Activated CD4-positive, alpha-beta T cell treated with anti-CD3 and anti-CD28 coated beads, Interleukin-2, amount 10 ng/mL, durations not matched to agents 24 days and 14 days (primary cell): ENCODE measurements at regions of chr7 and their contacts with region 1.

Region 1: GRCh38 chr7:142811154-142811737 is 40.5 kb downstream of the PRSS2 start:
- DNase-seq: peak; percentile 86
- H3K4me3 Mint-ChIP-seq: peak overlapping the region; percentile 73
- H3K27ac Mint-ChIP-seq: peak overlapping the region; percentile 99
- H3K4me1 Mint-ChIP-seq: peaks cover 75% of the 10 kb centered on the region
- H3K27me3 Mint-ChIP-seq: peaks cover 2% of the 10 kb centered on the region

Region 2: GRCh38 chr7:141551094-141551781 is 1260.0 kb before region 1 on chr7 and contains the start of gene AGK:
- intact Hi-C with region 1: loop called (anchors 10 kb)
- DNase-seq: peak; percentile 95
- H3K4me3 Mint-ChIP-seq: peak within 1 kb of the TSS; percentile 89
- H3K27ac Mint-ChIP-seq: peak within 1 kb of the TSS; percentile 93
- H3K4me1 Mint-ChIP-seq: peaks cover 43% of the 10 kb centered on the region
- H3K27me3 Mint-ChIP-seq: no peaks in the 10 kb centered on the region
- total RNA-seq, gene AGK: 146 and 151 TPM in 2 replicates

Region 3: DNA sequence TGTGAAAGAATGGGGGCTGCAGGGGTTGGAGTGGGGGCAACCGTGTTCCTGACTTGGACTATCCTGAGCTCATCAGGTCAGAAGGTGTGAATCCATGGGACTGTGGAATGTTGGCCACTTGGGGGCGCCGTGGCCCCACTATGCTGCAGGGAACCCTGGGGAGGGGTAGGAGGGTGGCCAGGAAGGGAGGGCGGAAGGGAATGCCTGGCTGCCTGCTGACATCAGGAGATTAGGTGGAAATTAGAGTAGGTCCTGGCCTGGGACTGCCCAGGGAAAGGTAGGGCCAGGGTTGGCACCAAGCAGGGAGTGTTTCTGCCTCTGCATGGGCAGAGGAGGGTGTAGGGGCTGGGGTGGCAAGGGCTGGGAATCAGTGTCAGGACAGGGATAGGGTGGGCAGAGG is 487.5 kb before region 1 on chr7:
- intact Hi-C with region 1: loop called (anchors 1 kb)
- DNase-seq: peak; percentile 78
- H3K4me3 Mint-ChIP-seq: peak overlapping the region; percentile 5
- H3K27ac Mint-ChIP-seq: no peak overlapping the region
- H3K4me1 Mint-ChIP-seq: peaks cover 7% of the 10 kb centered on the region
- H3K27me3 Mint-ChIP-seq: peaks cover 10% of the 10 kb centered on the region

Region 4: DNA sequence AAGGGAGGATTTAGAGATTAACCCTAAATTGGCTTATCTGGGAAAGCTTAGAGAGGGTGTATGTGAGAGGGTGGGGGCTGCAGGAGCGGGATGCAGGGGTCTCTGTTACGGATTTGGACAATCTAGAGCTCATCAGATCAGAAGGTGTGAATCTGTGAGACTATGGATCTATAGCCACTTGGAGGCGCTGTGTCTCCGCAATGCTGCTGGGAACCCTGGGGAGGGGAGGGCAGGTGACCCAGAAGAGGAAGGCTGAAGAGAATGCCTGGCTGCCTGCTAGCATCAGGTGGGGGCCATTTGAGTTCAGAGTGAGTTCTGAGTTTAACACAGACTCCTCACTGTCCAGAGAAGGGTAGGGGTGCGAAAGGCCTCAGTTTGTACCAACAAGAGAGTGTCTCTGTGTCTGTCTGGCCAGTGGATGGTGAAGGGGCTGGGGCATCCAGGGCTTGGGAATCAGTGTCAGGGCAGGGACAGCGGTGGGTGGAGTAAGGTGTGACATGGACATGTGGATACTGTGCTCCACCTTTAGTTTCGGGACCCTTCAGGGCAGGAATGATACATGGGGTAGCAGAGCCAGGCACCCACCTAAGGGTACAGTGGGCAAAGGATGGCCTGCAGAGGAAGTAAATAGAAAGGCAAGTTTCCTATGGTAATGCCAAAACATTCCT is 366.1 kb before region 1 on chr7:
- intact Hi-C with region 1: loop called (anchors 5 kb)
- DNase-seq: peak; percentile 81
- H3K4me3 Mint-ChIP-seq: no peak overlapping the region
- H3K27ac Mint-ChIP-seq: no peak overlapping the region
- H3K4me1 Mint-ChIP-seq: peaks cover 32% of the 10 kb centered on the region
- H3K27me3 Mint-ChIP-seq: peaks cover 11% of the 10 kb centered on the region

Region 5: GRCh38 chr7:142669074-142669654 is 142.1 kb before region 1 on chr7:
- intact Hi-C with region 1: loop called (anchors 1 kb)
- DNase-seq: peak; percentile 55
- H3K4me3 Mint-ChIP-seq: no peak overlapping the region
- H3K27ac Mint-ChIP-seq: no peak overlapping the region
- H3K4me1 Mint-ChIP-seq: peaks cover 19% of the 10 kb centered on the region
- H3K27me3 Mint-ChIP-seq: peaks cover 3% of the 10 kb centered on the region

Region 6: GRCh38 chr7:142797386-142798377 is 13.6 kb before region 1 on chr7:
- intact Hi-C with region 1: loop called (anchors 1 kb)
- DNase-seq: peak; percentile 78
- H3K4me3 Mint-ChIP-seq: peak overlapping the region; percentile 100
- H3K27ac Mint-ChIP-seq: peak overlapping the region; percentile 99
- H3K4me1 Mint-ChIP-seq: peaks cover 70% of the 10 kb centered on the region
- H3K27me3 Mint-ChIP-seq: no peaks in the 10 kb centered on the region

Region 7: GRCh38 chr7:143287935-143288826 is 476.9 kb after region 1 on chr7 and contains the start of gene CASP2:
- intact Hi-C with region 1: loop called (anchors 2 kb)
- DNase-seq: peak; percentile 100
- H3K4me3 Mint-ChIP-seq: peak within 1 kb of the TSS; percentile 97
- H3K27ac Mint-ChIP-seq: peak within 1 kb of the TSS; percentile 95
- H3K4me1 Mint-ChIP-seq: peaks cover 54% of the 10 kb centered on the region
- H3K27me3 Mint-ChIP-seq: no peaks in the 10 kb centered on the region
- total RNA-seq, gene CASP2: 99.1 and 110 TPM in 2 replicates